Aorta (tissue), 5 donors: ENCODE measurements at regions of chr10 and their contacts with region 1.

Region 1: DNA sequence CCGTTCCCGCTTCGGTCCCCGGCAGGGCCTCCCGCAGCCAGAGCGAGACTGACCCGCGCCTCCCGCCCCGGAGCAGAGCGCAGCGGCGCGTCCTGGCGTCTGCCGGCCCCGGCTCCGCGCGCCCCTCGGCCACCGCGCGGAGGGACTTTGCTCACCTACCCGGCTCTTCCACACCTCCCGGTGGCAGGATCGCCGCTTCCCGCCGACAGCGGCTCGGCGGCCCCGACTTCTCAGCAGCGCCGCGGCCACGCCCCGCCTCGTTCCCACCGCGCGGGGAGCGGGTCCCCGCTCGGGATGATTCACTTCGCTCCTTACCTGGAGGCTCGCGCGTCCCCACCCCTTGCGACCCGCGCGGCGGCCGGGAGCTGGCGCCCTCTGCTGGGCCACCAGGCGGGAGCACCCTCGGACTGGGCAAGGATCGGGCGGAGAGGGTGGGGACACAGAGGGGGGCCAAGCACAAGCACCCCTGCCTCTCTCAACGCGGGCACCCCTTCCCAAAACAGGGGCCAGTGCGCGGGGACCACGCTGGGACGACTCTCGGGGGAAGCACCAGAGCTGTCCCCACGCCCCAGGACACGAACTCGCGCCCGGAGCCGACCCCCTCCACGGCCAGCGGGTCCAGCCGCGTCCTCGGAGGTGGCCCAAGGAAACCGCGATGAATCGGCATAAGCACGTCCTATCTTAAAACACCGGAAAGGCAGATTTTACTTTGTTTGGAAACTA is 101.0 kb upstream of the SVIL start:
- DNase-seq: peak; percentile 89 to 97
- ATAC-seq: peak; percentile 94
- H3K4me3 ChIP-seq: peak overlapping the region; percentile 69 to 76
- H3K27ac ChIP-seq: peak overlapping the region; percentile 63 to 98
- H3K4me1 ChIP-seq: peaks cover 3 to 4% of the 10 kb centered on the region in 2 donors
- H3K27me3 ChIP-seq: no peaks in the 10 kb centered on the region

Region 2: DNA sequence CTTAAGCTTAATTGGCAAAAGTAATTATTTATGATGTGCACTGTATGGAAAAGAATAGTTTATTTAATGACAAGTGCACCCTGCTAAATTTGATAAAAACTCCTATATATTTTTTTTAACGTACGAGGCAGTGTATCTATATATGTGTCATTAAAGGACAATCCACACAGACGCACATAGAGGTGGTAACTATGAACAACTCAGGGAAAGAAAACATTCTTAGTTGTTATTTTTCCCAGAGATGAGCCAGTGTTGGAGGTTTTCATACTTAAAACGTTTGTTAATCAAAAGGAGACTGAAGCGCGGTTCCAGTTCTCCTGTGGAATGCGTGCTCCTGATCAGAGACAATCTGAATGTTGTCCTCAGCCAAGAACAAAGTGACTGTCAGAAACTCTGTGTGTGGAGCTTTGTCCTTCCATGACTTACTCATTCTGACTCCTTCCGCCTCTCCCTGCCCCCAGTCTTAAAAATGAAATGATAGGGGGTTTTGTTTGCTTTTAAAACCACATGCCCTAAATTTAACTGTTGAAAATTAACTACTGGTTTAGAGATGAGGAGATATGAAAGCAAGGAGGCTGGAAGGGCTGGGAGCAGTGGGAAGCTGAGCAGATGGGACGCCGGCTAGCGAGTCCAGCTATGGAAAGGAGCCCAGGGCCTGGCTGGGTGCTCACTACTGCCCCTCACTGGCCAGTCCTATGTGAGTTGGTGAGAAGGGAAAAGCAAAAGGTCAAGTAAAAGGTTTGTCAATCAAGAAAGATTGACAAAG is 200.6 kb before region 1 on chr10:
- intact Hi-C with region 1: loop called in 1 of 2 experiments (anchors 10 kb)
- DNase-seq: peak; percentile 63 to 82
- ATAC-seq: peak; percentile 61
- H3K4me3 ChIP-seq: no peak overlapping the region
- H3K27ac ChIP-seq: peak overlapping the region in 1 of 2 donors; percentile 73
- H3K4me1 ChIP-seq: peaks cover 0 to 11% of the 10 kb centered on the region in 2 donors
- H3K27me3 ChIP-seq: no peaks in the 10 kb centered on the region

Region 3: DNA sequence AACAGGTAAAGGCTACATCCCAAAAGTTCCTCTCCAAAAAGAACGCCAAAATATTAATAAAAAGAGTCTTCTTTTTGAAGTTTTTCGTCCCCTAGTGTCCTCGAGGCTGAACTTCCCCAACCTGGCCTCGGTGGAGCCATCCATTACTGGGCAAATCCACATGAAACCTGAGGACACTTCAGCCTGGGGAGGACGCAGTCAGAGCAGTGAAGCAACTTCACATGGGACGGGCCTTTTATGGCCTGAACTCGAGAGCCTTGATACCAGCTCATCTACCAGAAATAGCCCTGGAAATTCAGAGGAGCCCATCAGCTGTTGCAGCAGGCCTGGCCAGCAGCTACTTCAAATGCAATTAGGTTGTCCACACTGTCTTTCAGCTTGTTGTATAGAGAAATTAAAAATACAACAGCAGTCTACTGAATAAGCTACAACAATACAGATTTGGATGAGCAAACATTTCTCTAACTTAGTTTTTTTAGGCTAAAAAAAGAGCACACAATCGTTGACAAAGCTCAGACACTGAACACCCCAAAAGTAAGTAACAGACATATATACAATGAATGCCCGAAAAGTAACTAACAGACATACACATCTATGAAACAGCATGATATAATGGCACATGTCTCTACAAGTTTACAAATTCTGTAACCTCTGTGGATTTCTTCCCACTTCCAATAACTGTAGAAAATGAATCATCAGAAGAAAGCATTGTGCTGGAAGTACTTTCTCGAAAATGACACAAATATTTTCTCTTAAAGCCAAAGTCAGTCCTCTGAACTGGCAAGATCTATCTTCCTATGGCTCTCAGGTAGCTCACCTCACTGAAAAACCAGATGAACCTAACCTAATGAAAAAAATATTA is 100.8 kb before region 1 on chr10 and contains the start of gene SVIL:
- intact Hi-C with region 1: loop called in 1 of 2 experiments (anchors 5 kb)
- DNase-seq: peak; percentile 79 to 85
- ATAC-seq: peak; percentile 92
- H3K4me3 ChIP-seq: peak within 1 kb of the TSS; percentile 76 to 95
- H3K27ac ChIP-seq: peak within 1 kb of the TSS; percentile 87 to 95
- H3K4me1 ChIP-seq: peaks cover 4 to 9% of the 10 kb centered on the region in 2 donors
- H3K27me3 ChIP-seq: no peaks in the 10 kb centered on the region
- total RNA-seq, gene SVIL: 319 to 374 TPM

Region 4: DNA sequence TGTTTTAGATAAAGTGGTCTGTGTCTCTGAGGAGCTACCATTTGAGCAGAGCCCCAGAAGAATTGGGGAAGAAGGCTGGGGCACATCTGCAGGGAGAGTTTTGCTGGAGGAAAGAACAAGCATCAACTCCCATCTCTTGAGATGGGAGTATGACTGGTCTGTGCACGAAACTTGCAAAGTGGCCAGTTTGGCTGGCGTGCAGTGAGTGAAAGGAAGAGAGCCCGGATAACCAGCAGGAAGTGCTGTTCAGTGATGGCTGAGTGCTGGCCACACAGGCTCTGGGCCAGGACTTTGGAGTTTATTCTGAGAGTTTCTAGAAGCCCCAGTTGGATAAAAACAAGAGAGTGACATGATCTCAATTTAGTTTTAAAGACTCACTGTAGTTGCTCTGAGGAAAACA is 66.6 kb before region 1 on chr10:
- intact Hi-C with region 1: no loop called
- DNase-seq: peak in 1 of 2 donors; percentile 81
- ATAC-seq: peak; percentile 73
- H3K4me3 ChIP-seq: no peak overlapping the region
- H3K27ac ChIP-seq: peak overlapping the region in 1 of 2 donors; percentile 38
- H3K4me1 ChIP-seq: peaks cover 0 to 8% of the 10 kb centered on the region in 2 donors
- H3K27me3 ChIP-seq: no peaks in the 10 kb centered on the region

Region 5: GRCh38 chr10:29784175-29784773 is 48.5 kb after region 1 on chr10:
- intact Hi-C with region 1: loop called (anchors 5 kb)
- DNase-seq: peak in 1 of 2 donors; percentile 78
- ATAC-seq: peak; percentile 94
- H3K4me3 ChIP-seq: no peak overlapping the region
- H3K27ac ChIP-seq: peak overlapping the region in 1 of 2 donors; percentile 95
- H3K4me1 ChIP-seq: peaks cover 0 to 4% of the 10 kb centered on the region in 2 donors
- H3K27me3 ChIP-seq: no peaks in the 10 kb centered on the region

Region 6: GRCh38 chr10:29811751-29812449 is 76.1 kb after region 1 on chr10:
- intact Hi-C with region 1: loop called in 1 of 2 experiments (anchors 5 kb)
- DNase-seq: peak in 1 of 2 donors; percentile 76
- ATAC-seq: peak; percentile 90
- H3K4me3 ChIP-seq: no peak overlapping the region
- H3K27ac ChIP-seq: peak overlapping the region; percentile 95 to 99
- H3K4me1 ChIP-seq: peaks cover 4 to 8% of the 10 kb centered on the region in 2 donors
- H3K27me3 ChIP-seq: no peaks in the 10 kb centered on the region

Region 7: GRCh38 chr10:29857843-29858701 is 122.3 kb after region 1 on chr10:
- intact Hi-C with region 1: loop called (anchors 2 to 5 kb)
- DNase-seq: peak; percentile 80 to 86
- ATAC-seq: peak; percentile 81
- H3K4me3 ChIP-seq: no peak overlapping the region
- H3K27ac ChIP-seq: peak overlapping the region in 1 of 2 donors; percentile 60
- H3K4me1 ChIP-seq: peaks cover 0 to 4% of the 10 kb centered on the region in 2 donors
- H3K27me3 ChIP-seq: no peaks in the 10 kb centered on the region

Region 8: DNA sequence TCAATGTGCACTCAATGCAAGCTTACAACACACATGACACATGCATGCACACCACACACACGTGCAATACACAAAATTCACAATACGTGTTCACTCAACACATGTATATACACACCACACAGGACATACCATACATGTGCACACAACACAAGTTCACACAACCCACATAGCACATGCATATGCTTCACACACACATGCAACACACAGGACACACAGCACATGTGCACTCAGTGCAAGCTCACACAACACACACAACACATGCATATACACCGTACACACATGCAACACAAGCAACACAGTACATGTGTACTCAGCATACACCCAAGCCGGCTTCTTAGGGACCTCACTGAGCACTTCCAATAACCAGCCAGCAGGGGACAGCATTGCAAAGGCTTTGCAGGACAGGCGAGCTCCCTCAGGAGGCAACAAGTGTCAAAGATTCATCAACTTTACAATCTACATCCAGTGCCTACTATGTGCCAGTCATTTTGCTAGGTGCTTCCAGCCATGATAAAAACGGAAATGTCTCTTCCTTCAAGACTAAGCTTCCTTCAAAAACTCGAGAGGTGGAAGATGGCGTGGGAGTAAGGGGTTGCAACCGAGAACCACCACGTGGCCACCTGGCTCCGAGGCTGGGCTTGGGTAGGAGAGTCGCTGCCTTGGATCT is 262.5 kb after region 1 on chr10:
- intact Hi-C with region 1: loop called (anchors 5 kb)
- DNase-seq: peak; percentile 73 to 87
- ATAC-seq: peak; percentile 72
- H3K4me3 ChIP-seq: no peak overlapping the region
- H3K27ac ChIP-seq: no peak overlapping the region
- H3K4me1 ChIP-seq: peaks cover 0 to 4% of the 10 kb centered on the region in 2 donors
- H3K27me3 ChIP-seq: no peaks in the 10 kb centered on the region

Region 9: GRCh38 chr10:30186371-30186875 is 450.7 kb after region 1 on chr10:
- intact Hi-C with region 1: no loop called
- DNase-seq: no peak
- ATAC-seq: no peak
- H3K4me3 ChIP-seq: no peak overlapping the region
- H3K27ac ChIP-seq: peak overlapping the region in 1 of 2 donors; percentile 26
- H3K4me1 ChIP-seq: peaks cover 0 to 2% of the 10 kb centered on the region in 2 donors
- H3K27me3 ChIP-seq: no peaks in the 10 kb centered on the region